Activated CD4-positive, alpha-beta T cell treated with anti-CD3 and anti-CD28 coated beads, Interleukin-2, amount 10 ng/mL, durations not matched to agents 7 days and 5 days (primary cell): ENCODE measurements at regions of chr14 and their contacts with region 1.

Region 1: DNA sequence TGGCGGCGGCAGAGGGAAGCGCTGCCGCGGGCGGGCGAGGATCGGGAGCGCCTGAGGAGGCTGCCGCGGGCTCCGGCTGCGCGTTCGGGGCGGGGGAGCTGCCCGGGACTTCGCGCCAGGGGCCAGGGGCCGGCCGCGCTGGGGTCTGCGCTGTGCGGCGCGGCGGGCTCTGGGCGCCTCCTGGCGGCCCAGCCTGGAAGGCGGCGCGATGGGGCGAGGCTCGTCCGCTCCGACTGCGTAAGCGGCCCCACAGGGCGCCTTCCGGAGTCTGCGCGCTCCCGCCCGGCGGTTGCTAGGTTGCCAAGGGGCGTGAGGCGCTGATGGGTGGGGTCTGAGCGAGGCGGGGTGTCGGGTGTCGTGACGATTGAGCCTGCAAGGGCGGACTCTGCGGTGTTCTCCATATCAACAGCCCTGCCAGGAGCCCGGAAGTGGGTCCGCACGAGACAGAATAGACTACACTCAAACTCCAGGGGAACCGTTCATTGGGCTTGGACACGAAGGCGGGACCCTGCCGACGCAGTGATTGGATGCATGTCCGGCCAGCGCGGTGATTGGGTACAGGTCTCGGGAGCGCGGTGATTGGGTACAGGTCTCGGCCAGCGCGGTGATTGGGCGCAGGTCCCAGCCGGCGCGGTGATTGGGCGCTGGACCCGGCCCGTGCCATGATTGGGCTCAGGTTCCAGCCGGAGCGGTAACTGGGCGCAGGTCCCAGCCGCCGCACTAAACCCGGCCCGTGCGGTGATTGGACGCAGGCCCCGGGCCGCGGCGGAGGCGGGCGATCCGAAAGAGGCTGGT is at the start of gene TEDC1:
- DNase-seq: peak; percentile 100
- H3K4me3 Mint-ChIP-seq: peak within 1 kb of the TSS; percentile 84
- H3K27ac Mint-ChIP-seq: peak within 1 kb of the TSS; percentile 96
- H3K4me1 Mint-ChIP-seq: peaks cover 28% of the 10 kb centered on the region
- H3K27me3 Mint-ChIP-seq: peaks cover 2% of the 10 kb centered on the region
- total RNA-seq, gene TEDC1: 40.7 to 53.2 TPM

Region 2: GRCh38 chr14:105398044-105398725 is 92.6 kb before region 1 on chr14 and contains the start of gene TEX22:
- CTCF ChIA-PET with region 1: interaction called, 13 read pairs
- POLR2A ChIA-PET with region 1: no interaction called
- DNase-seq: peak; percentile 88
- H3K4me3 Mint-ChIP-seq: peak within 1 kb of the TSS; percentile 89
- H3K27ac Mint-ChIP-seq: peak within 1 kb of the TSS; percentile 92
- H3K4me1 Mint-ChIP-seq: peaks cover 27% of the 10 kb centered on the region
- H3K27me3 Mint-ChIP-seq: no peaks in the 10 kb centered on the region
- total RNA-seq, gene TEX22: 2.8 to 3.9 TPM

Region 3: GRCh38 chr14:105473677-105474482 is 16.9 kb before region 1 on chr14:
- CTCF ChIA-PET with region 1: interaction called, 24 read pairs
- POLR2A ChIA-PET with region 1: no interaction called
- DNase-seq: peak; percentile 86
- H3K4me3 Mint-ChIP-seq: peak overlapping the region; percentile 67
- H3K27ac Mint-ChIP-seq: no peak overlapping the region
- H3K4me1 Mint-ChIP-seq: peaks cover 9% of the 10 kb centered on the region
- H3K27me3 Mint-ChIP-seq: peaks cover 16% of the 10 kb centered on the region